ENCODE measurements at regions of chr2 and their contacts with region 1.

Region 1: GRCh38 chr2:232385660-232386489 is 7.3 kb downstream of the ALPP start:
- DNase-seq: peak; percentile 83 to 98
- H3K4me3 ChIP-seq: peak overlapping the region; percentile 36; the same call in 1 of the 2 replicates
- H3K27ac ChIP-seq: peak overlapping the region; percentile 78
- H3K4me1 ChIP-seq: peaks cover 20% of the 10 kb centered on the region
- H3K27me3 ChIP-seq: no peaks in the 10 kb centered on the region
- CTCF ChIP-seq: no peak; the same call in 1 of the 2 replicates

Region 2: GRCh38 chr2:231866450-231866849 is 519.4 kb before region 1 on chr2:
- CTCF ChIA-PET with region 1: no interaction called
- POLR2A ChIA-PET with region 1: interaction called, 15 read pairs
- intact Hi-C with region 1: no loop called
- DNase-seq: no peak
- H3K4me3 ChIP-seq: no peak overlapping the region
- H3K27ac ChIP-seq: no peak overlapping the region
- H3K4me1 ChIP-seq: no peaks in the 10 kb centered on the region
- H3K27me3 ChIP-seq: no peaks in the 10 kb centered on the region; the same call in 1 of the 2 replicates
- CTCF ChIP-seq: no peak

Region 3: GRCh38 chr2:232103140-232103737 is 282.6 kb before region 1 on chr2:
- CTCF ChIA-PET with region 1: no interaction called
- POLR2A ChIA-PET with region 1: no interaction called
- intact Hi-C with region 1: no loop called
- DNase-seq: no peak
- H3K4me3 ChIP-seq: no peak overlapping the region
- H3K27ac ChIP-seq: no peak overlapping the region
- H3K4me1 ChIP-seq: no peaks in the 10 kb centered on the region
- H3K27me3 ChIP-seq: no peaks in the 10 kb centered on the region
- CTCF ChIP-seq: no peak

Region 4: DNA sequence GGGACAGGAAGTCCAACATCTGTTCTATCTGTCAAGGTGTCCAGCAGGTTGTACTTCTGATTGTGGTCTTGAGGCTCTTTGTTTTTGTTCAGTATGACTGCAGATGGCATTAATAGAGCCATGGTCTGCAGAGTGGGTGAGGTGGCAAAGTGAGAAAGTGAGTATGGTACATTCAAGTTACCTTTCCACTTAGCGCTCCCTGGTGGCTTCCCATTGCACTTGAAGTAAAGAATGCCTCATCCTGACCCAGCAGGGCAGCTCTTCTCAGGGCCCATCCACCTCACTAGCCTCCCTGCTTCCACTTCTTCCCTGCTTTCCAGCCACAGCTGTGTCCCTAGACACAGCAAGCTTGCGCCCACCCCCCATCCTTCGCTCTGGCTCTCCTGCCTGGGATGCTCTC is 155.3 kb before region 1 on chr2:
- CTCF ChIA-PET with region 1: no interaction called
- POLR2A ChIA-PET with region 1: no interaction called
- intact Hi-C with region 1: no loop called
- DNase-seq: no peak
- H3K4me3 ChIP-seq: no peak overlapping the region
- H3K27ac ChIP-seq: no peak overlapping the region
- H3K4me1 ChIP-seq: peaks cover 16% of the 10 kb centered on the region
- H3K27me3 ChIP-seq: no peaks in the 10 kb centered on the region
- CTCF ChIP-seq: no peak

Region 5: GRCh38 chr2:232327105-232328041 is 58.5 kb before region 1 on chr2:
- CTCF ChIA-PET with region 1: no interaction called
- POLR2A ChIA-PET with region 1: no interaction called
- intact Hi-C with region 1: loop called (anchors 1 kb)
- DNase-seq: peak in 1 of 2 experiments; percentile 66
- H3K4me3 ChIP-seq: no peak overlapping the region
- H3K27ac ChIP-seq: no peak overlapping the region
- H3K4me1 ChIP-seq: no peaks in the 10 kb centered on the region
- H3K27me3 ChIP-seq: no peaks in the 10 kb centered on the region
- CTCF ChIP-seq: peak; percentile 86

Region 6: DNA sequence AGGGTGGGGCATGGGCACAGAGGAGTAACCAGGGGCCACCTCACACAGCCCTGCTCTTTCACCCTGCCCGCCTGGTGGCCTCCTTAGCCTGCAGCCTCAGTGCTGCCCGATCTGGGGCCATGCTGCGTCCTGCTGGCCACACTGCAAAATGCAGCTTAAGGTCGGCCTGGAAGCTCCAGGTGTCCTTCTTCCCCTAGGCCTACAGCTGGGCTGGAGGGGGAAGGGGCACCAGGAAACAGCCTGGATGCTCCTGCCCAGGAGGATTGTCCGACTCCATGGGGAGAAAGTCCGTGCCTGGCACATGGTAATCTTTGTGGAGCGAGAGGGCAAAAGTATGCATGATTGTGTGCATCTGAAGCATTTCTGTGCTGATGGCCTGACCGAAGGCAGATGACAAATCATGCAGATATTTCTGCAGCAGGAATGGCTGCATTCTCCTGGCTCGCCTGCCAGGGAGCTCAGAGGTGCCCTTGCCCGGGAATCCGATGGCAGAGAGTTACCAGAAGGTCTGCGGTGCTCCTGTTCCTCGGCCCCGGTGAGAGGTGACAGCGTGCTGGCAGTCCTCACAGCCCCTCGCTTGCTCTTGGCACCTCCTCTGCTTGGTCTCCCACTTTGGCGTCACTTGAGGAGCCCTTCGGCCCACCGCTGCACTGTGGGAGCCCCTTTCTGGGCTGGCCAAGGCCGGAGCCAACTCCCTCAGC is 20.1 kb before region 1 on chr2:
- CTCF ChIA-PET with region 1: interaction called, 3 read pairs
- POLR2A ChIA-PET with region 1: interaction called, 31 read pairs
- intact Hi-C with region 1: loop called (anchors 2 kb)
- DNase-seq: peak; percentile 78 to 84
- H3K4me3 ChIP-seq: no peak overlapping the region
- H3K27ac ChIP-seq: peak overlapping the region; percentile 52
- H3K4me1 ChIP-seq: peaks cover 12% of the 10 kb centered on the region
- H3K27me3 ChIP-seq: no peaks in the 10 kb centered on the region
- CTCF ChIP-seq: peak; percentile 72

Region 7: GRCh38 chr2:232420463-232421188 is 34.8 kb after region 1 on chr2:
- CTCF ChIA-PET with region 1: interaction called, 5 read pairs
- POLR2A ChIA-PET with region 1: interaction called, 5 read pairs
- intact Hi-C with region 1: loop called (anchors 1 kb)
- DNase-seq: peak; percentile 52 to 70
- H3K4me3 ChIP-seq: peak overlapping the region; percentile 58
- H3K27ac ChIP-seq: peak overlapping the region; percentile 81
- H3K4me1 ChIP-seq: peaks cover 11% of the 10 kb centered on the region
- H3K27me3 ChIP-seq: no peaks in the 10 kb centered on the region
- CTCF ChIP-seq: no peak

Region 8: DNA sequence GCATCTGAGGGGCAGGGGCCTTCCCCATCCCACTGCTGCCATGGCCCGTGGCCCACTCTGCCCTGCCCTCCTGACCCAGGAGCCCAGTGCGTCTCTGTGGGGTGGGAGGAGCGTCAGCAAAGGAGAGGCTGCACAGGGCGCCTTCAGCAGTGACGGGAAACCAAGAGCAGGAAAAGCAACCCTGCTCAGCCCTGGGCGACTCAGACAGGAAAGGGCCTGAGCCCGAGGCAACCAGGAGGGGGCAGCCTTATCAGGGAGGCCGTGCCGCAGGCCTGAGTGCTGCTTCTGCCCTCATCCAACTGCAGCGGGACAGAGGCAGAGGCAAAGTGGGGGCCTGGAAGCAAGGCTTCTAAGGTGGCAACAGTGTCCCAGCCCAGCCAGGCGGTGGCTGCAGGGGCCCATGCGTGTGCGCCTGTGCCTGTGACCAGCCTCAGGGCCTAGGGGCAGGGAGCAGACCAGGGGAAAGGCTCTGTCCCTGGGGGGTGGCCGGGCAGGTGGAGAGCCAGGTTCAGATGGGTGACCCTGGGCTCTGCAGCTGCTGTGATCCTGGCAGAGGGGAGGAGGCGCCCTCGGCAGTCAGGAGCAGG is 46.8 kb after region 1 on chr2:
- CTCF ChIA-PET with region 1: interaction called, 12 read pairs
- POLR2A ChIA-PET with region 1: interaction called, 15 read pairs
- intact Hi-C with region 1: loop called (anchors 5 kb)
- DNase-seq: no peak
- H3K4me3 ChIP-seq: no peak overlapping the region
- H3K27ac ChIP-seq: no peak overlapping the region
- H3K4me1 ChIP-seq: peaks cover 10% of the 10 kb centered on the region
- H3K27me3 ChIP-seq: no peaks in the 10 kb centered on the region
- CTCF ChIP-seq: 0 out of 2 replicates have a peak, but pooled peaks have one; percentile 26

Region 9: GRCh38 chr2:232438951-232439757 is 53.3 kb after region 1 on chr2:
- CTCF ChIA-PET with region 1: no interaction called
- POLR2A ChIA-PET with region 1: interaction called, 15 read pairs
- intact Hi-C with region 1: loop called (anchors 5 kb)
- DNase-seq: peak in 1 of 2 experiments; percentile 60
- H3K4me3 ChIP-seq: no peak overlapping the region
- H3K27ac ChIP-seq: no peak overlapping the region
- H3K4me1 ChIP-seq: peaks cover 10% of the 10 kb centered on the region
- H3K27me3 ChIP-seq: no peaks in the 10 kb centered on the region
- CTCF ChIP-seq: peak; percentile 65

Measured in PC-9 (cell line).